H1 (cell line): ENCODE measurements at regions of chr17 and their contacts with region 1.

Region 1: GRCh38 chr17:11278186-11278991 is 37.4 kb downstream of the SHISA6 start:
- DNase-seq: no peak
- H3K4me3 ChIP-seq: no peak overlapping the region
- H3K27ac ChIP-seq: no peak overlapping the region
- H3K4me1 ChIP-seq: peaks cover 0 to 2% (median under 1%) of the 10 kb centered on the region in 4 experiments; a peak in 2 of 7 replicates
- H3K27me3 ChIP-seq: no peaks in the 10 kb centered on the region
- CTCF ChIP-seq: no peak
- EP300 ChIP-seq: no peak
- POLR2A ChIP-seq: no peak
- RAD21 ChIP-seq: no peak

Region 2: GRCh38 chr17:11195801-11196200 is 82.6 kb before region 1 on chr17:
- CTCF ChIA-PET with region 1: no interaction called
- POLR2A ChIA-PET with region 1: no interaction called
- DNase-seq: no peak
- H3K4me3 ChIP-seq: no peak overlapping the region
- H3K27ac ChIP-seq: no peak overlapping the region
- H3K4me1 ChIP-seq: peaks cover 0 to 10% (median 4%) of the 10 kb centered on the region in 4 experiments; a peak in 3 of 7 replicates
- H3K27me3 ChIP-seq: peaks cover 0 to 1% (median 0%) of the 10 kb centered on the region in 4 experiments; a peak in 2 of 7 replicates
- CTCF ChIP-seq: no peak
- EP300 ChIP-seq: no peak
- POLR2A ChIP-seq: no peak
- RAD21 ChIP-seq: no peak

Region 3: DNA sequence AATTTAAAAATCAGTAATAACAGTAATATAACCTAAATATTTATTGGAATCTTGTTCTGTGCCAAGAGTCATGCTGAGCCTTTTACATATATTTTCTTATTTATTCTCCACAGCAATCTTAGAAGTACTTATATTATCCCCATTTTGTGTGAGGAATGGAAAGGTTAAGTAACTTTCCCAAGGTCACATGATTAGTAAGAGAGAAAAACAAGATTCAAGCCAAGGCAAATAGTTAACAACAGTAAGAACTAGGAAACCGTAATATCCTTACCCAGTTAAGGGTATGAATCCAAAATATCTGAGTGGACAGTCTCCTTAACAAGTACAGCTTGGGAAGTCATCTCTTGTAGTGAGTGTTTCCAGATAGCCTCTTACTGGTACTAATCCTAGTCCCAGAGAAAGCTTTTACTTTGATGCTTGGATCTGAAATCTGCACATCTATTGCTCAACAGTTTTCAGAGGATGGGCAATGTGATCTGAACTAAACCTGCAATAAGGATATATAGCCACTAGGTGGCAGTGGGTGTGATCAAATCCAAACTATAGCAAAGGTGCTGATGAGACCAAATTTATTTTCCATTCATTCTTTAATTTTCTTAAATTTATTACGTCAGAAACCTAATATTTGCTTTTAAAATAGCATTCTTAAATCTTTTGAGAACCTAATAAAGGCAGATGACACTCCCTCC is 14.1 kb before region 1 on chr17:
- CTCF ChIA-PET with region 1: interaction called, 26 read pairs
- POLR2A ChIA-PET with region 1: no interaction called
- DNase-seq: no peak
- H3K4me3 ChIP-seq: no peak overlapping the region
- H3K27ac ChIP-seq: no peak overlapping the region
- H3K4me1 ChIP-seq: peaks cover 0 to 3% (median 2%) of the 10 kb centered on the region in 4 experiments; a peak in 1 of 7 replicates
- H3K27me3 ChIP-seq: no peaks in the 10 kb centered on the region
- CTCF ChIP-seq: peak in 2 of 3 experiments; percentile 26 to 57; a peak in 1 of 4 replicates
- EP300 ChIP-seq: no peak
- POLR2A ChIP-seq: no peak
- RAD21 ChIP-seq: peak; percentile 37 to 42; a peak in 3 of 4 replicates

Region 4: GRCh38 chr17:11330826-11331225 is 52.4 kb after region 1 on chr17:
- CTCF ChIA-PET with region 1: no interaction called
- POLR2A ChIA-PET with region 1: no interaction called
- DNase-seq: peak; percentile 44 to 62
- H3K4me3 ChIP-seq: peak overlapping the region in 1 of 4 experiments; percentile 23; a peak in 1 of 8 replicates
- H3K27ac ChIP-seq: no peak overlapping the region
- H3K4me1 ChIP-seq: peaks cover 0 to 19% (median 5%) of the 10 kb centered on the region in 4 experiments; a peak in 6 of 7 replicates
- H3K27me3 ChIP-seq: no peaks in the 10 kb centered on the region
- CTCF ChIP-seq: no peak
- EP300 ChIP-seq: no peak
- POLR2A ChIP-seq: no peak
- RAD21 ChIP-seq: no peak